WTC11 (cell line): ENCODE measurements at regions of chr7 and their contacts with region 1.

Region 1: DNA sequence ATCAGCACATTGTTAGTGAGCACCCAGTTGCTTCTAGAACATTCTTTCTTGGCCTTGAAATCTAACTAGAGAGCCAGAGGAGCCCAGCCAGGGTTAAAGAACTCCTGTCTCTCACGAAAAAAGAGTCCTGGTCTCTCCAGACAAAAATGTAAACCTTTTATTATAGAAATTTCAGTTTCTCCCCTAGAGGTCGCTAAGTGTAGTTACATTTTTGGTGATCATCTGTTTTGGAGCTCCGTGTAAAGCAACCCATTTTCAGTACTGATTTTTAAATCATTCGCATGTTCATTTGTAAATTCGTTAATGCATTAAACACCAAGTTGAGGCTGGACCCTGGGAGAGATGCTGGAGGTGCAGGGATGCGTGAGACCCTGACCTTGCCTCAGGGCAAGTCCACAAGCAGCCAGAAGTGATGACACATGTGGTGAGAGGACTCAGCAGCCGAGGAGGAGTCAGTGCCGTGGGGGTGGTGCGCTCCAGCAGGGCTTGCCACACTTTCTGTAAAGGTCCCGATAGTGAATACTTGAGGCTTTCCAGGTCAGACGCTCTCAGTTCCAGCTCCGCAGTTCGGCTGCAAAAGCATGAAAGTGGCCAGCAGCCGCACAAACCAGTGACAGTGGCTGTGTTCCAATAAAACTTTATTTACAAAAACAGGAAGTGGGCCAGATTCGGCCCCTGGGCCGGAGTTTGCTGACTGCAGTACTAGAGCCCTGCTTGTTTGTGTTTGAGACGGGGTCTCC is 578.6 kb upstream of the FOXK1 start:
- DNase-seq: no peak
- ATAC-seq: no peak; the same call in none of the 2 replicates
- H3K4me3 Mint-ChIP-seq: no peak overlapping the region
- H3K27ac Mint-ChIP-seq: peak overlapping the region; percentile 77; the same call in 1 of the 2 replicates
- H3K4me1 Mint-ChIP-seq: peaks cover 16% of the 10 kb centered on the region
- H3K27me3 Mint-ChIP-seq: no peaks in the 10 kb centered on the region; the same call in 1 of the 2 replicates
- CTCF ChIP-seq: no peak

Region 2: DNA sequence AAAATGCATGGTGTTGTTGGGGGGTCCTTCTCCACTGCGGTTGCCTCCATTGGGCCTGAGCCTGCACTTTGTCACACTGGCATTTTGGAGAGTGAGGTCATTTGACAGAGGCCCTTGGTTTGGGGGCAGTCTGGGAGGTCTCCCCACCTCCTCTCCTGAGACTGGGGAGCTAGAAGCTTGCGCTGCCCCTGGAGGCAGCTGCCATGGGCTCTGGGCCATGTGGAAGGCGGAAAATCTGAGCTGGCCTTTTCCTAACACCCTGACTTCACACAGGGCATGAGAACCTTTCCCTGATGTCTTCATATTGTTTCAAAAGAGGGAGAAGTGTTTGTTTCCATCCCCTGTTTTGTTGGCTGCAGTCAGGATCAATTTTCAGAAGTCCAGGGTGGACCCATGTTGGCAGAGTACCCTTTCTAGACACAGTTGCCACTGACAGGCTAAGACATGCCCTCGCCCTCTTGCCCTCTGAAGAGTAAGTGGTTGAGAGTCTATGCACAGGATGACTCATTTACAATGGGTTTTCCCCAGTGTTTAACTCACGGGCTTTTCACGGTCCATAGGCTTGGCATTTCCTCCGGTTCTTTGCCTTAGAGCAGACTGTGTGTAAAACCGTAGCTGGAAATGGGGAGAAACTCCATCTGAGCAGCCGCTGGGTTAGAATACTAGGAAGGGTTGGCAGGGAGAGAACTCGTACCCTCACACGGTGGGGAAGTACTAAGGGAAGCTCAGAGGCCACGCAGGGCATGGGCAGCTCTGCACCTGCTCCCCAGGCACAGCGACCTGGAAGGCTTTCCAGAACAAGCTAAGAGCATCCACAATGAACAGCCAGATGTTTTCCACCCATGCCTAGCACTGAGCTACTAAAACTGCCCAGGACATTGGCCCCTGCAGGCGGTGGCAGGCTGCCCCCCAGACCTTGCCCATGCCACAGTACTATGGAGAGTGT is 147.5 kb before region 1 on chr7:
- CTCF ChIA-PET with region 1: no interaction called
- POLR2A ChIA-PET with region 1: no interaction called
- DNase-seq: no peak
- ATAC-seq: no peak
- H3K4me3 Mint-ChIP-seq: no peak overlapping the region
- H3K27ac Mint-ChIP-seq: no peak overlapping the region
- H3K4me1 Mint-ChIP-seq: no peaks in the 10 kb centered on the region
- H3K27me3 Mint-ChIP-seq: no peaks in the 10 kb centered on the region
- CTCF ChIP-seq: no peak

Region 3: DNA sequence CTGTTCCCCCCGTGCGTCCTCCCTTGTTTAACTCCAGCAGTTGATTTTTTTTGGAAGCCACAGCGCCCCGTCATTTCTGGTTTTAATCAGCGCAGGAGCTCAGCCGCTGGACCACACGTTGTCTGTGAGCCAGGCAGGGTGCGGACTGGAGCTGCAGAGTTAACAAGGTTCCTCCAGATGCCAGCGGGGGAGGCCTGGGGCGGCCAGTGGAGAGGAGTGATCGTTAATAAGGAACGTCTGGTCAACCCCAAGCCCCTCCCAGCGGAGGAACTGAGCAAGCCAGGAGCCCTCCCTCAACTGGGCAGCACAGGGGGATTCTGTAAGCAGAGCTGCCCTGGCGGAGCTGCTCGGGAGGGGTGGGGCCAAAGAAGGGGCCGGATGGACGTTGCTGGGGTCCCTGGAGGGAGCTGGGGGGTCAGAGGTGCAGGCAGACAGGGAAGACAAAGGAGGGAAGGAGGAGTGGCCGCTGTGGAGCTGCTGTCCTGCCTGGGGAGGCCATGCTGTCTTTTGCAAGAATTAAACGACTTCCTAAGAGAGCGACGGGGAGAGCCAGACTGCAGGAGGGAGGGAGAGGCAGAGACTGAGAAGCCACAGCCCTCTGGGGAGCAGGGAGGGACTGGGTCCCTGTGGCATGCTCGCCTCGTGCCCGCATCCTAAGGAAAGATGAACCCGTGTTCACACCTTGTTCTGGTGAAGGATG is 41.4 kb after region 1 on chr7:
- CTCF ChIA-PET with region 1: interaction called, 16 read pairs
- POLR2A ChIA-PET with region 1: no interaction called
- DNase-seq: peak; percentile 44
- ATAC-seq: peak; percentile 62
- H3K4me3 Mint-ChIP-seq: peak overlapping the region; percentile 41
- H3K27ac Mint-ChIP-seq: no peak overlapping the region
- H3K4me1 Mint-ChIP-seq: peaks cover 25% of the 10 kb centered on the region
- H3K27me3 Mint-ChIP-seq: no peaks in the 10 kb centered on the region; the same call in 1 of the 2 replicates
- CTCF ChIP-seq: no peak

Region 4: DNA sequence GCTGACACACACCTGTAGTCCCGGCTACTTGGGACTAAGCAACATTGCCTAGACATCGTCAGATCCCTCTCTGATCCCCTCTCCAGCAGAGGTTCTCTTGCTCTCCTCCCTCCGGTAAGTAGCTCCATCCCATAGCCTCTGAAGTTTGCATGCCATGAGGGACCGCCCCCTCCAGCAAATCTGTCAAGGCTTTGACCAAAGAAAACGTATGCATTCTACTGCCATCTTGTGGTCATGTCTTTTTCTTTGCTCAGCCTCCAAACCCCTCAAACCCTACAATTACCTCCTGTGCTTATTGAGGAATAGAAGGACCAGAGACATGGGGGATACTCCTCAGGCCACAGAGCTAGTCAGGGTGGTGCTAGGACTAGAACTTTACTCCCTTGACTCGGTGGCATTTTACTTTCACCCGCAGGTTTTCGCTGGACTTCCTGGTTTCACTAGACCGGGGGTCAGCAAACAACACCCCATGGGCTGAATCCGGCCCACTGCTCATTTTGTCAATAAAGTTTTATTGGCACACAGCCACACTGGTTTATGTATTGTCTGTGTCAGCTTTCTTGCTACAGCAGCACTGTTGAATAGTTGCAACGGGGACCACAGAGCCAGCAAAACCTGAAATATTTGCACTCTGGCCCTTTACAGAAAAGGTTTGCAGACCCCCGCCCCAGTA is 376.0 kb after region 1 on chr7:
- CTCF ChIA-PET with region 1: interaction called, 10 read pairs
- POLR2A ChIA-PET with region 1: no interaction called
- DNase-seq: peak; percentile 70
- ATAC-seq: peak; percentile 97
- H3K4me3 Mint-ChIP-seq: no peak overlapping the region
- H3K27ac Mint-ChIP-seq: no peak overlapping the region
- H3K4me1 Mint-ChIP-seq: no peaks in the 10 kb centered on the region
- H3K27me3 Mint-ChIP-seq: peaks cover 3% of the 10 kb centered on the region; the same call in 1 of the 2 replicates
- CTCF ChIP-seq: peak; percentile 34; the same call in 1 of the 2 replicates

Region 5: DNA sequence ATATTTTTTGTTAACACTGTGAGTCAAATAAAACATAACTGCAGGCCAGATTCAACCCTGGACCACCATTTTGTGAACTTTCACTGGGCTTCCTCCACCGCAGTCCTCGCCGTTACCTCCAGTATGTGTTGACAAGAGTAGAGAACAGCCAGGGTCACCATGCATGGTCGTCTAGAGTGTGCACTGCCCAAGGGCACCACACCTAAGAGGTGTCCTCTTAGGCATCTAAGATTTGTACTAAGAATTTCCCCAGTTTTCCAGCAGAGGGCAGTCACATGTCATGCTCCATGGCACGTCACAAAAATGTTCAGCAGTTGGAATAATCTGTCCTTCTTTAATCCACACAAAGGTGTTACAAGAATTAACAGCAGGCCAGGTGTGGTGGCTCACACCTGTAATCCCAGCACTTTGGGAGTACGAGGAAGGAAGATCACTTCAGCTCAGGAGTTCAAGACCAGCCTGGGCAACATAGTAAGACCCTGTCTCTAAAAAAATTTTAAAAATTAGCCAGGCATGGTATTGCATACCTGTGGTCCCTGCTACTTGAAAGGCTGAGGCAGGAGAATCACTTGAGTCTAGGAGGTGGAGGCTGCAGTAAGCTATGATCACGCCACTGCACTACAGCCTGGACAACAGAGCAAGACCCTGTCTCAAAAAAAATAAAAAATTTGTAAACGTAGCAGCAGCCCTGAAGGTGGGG is 507.4 kb after region 1 on chr7:
- CTCF ChIA-PET with region 1: no interaction called
- POLR2A ChIA-PET with region 1: interaction called, 14 read pairs
- DNase-seq: peak; percentile 36
- ATAC-seq: peak; percentile 74
- H3K4me3 Mint-ChIP-seq: no peak overlapping the region
- H3K27ac Mint-ChIP-seq: no peak overlapping the region
- H3K4me1 Mint-ChIP-seq: peaks cover 14% of the 10 kb centered on the region
- H3K27me3 Mint-ChIP-seq: peaks cover 4% of the 10 kb centered on the region; the same call in 1 of the 2 replicates
- CTCF ChIP-seq: peak; percentile 53